ENCODE measurements at regions of chr13 and their contacts with region 1.

Region 1: GRCh38 chr13:97359181-97360057 is 74.5 kb upstream of the RAP2A start:
- DNase-seq: peak; percentile 87
- H3K4me3 Mint-ChIP-seq: no peak overlapping the region
- H3K27ac Mint-ChIP-seq: peak overlapping the region; percentile 49
- H3K4me1 Mint-ChIP-seq: no peaks in the 10 kb centered on the region
- H3K27me3 Mint-ChIP-seq: no peaks in the 10 kb centered on the region
- CTCF ChIP-seq: peak; percentile 96

Region 2: DNA sequence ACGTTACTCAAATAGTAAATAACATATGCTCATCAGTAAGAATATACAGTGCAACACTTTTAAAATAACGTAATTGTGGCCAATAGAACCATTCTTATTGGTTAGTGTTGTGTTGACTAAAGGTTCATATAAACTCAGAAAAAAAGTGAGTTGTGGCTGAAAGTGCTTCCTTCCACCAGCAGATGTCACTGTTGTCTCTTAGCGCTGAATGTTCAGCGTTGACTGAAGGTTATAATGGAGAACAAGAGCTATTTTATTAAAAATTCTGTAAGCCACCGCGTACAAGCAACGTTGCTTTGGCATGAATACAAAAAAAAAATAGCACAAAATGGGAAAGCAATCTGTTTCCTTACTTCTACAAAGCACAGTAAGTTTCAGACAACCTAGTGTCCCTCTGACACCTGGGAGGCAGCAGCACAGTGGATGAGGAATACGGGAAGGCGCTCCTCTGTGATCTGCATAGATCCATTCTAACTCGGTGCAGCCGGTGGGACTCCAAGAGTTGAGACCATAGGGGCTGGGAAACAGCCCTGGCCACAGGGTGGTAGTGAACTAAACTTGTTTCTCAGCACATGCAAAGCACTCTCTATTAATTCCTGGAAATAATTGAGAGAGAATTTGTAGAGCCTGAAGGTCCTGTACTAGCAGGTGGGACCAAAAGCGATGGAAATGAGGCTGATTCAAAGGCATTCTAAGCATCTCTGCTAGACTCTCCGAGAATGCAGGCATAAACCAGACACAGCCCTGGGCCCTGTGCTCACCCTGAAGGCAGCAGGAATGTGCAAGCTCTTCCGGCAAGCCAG is 341.2 kb before region 1 on chr13:
- CTCF ChIA-PET with region 1: interaction called, 17 read pairs
- POLR2A ChIA-PET with region 1: interaction called, 5 read pairs
- intact Hi-C with region 1: loop called (anchors 1 kb)
- DNase-seq: peak; percentile 80
- H3K4me3 Mint-ChIP-seq: peak overlapping the region; percentile 11
- H3K27ac Mint-ChIP-seq: no peak overlapping the region
- H3K4me1 Mint-ChIP-seq: no peaks in the 10 kb centered on the region
- H3K27me3 Mint-ChIP-seq: peaks cover 27% of the 10 kb centered on the region
- CTCF ChIP-seq: peak; percentile 89

Region 3: GRCh38 chr13:97124916-97125809 is 234.3 kb before region 1 on chr13:
- CTCF ChIA-PET with region 1: interaction called, 13 read pairs
- POLR2A ChIA-PET with region 1: no interaction called
- intact Hi-C with region 1: no loop called
- DNase-seq: peak; percentile 89
- H3K4me3 Mint-ChIP-seq: peak overlapping the region; percentile 28
- H3K27ac Mint-ChIP-seq: peak overlapping the region; percentile 21
- H3K4me1 Mint-ChIP-seq: peaks cover 47% of the 10 kb centered on the region
- H3K27me3 Mint-ChIP-seq: no peaks in the 10 kb centered on the region
- CTCF ChIP-seq: no peak

Region 4: DNA sequence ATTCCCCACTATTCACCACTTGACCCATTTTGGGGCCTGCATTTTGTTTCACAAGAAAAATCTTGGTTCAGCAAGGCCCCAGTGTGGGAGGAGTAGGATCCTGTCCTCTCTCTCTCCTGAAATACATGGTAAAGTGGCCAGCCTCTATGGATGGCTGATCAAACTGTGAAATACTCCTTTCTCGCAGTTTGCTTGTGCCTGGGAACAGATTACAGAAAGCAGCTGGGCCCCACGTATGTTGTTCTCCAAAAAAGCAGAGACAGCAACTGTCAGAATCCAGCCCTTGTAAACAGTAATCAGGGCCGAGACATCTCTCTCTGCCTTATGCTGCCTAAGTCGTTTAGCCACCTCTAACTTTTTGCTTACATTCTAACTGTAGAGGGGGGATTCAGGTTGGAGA is 13.5 kb after region 1 on chr13:
- CTCF ChIA-PET with region 1: interaction called, 41 read pairs
- POLR2A ChIA-PET with region 1: interaction called, 4 read pairs
- intact Hi-C with region 1: no loop called
- DNase-seq: no peak
- H3K4me3 Mint-ChIP-seq: no peak overlapping the region
- H3K27ac Mint-ChIP-seq: no peak overlapping the region
- H3K4me1 Mint-ChIP-seq: peaks cover 6% of the 10 kb centered on the region
- H3K27me3 Mint-ChIP-seq: no peaks in the 10 kb centered on the region
- CTCF ChIP-seq: no peak

Region 5: GRCh38 chr13:97798836-97799235 is 439.4 kb after region 1 on chr13:
- CTCF ChIA-PET with region 1: interaction called, 6 read pairs
- POLR2A ChIA-PET with region 1: no interaction called
- intact Hi-C with region 1: loop called (anchors 5 kb)
- DNase-seq: no peak
- H3K4me3 Mint-ChIP-seq: peak overlapping the region; percentile 38
- H3K27ac Mint-ChIP-seq: peak overlapping the region; percentile 76
- H3K4me1 Mint-ChIP-seq: peaks cover 26% of the 10 kb centered on the region
- H3K27me3 Mint-ChIP-seq: no peaks in the 10 kb centered on the region
- CTCF ChIP-seq: no peak

Region 6: DNA sequence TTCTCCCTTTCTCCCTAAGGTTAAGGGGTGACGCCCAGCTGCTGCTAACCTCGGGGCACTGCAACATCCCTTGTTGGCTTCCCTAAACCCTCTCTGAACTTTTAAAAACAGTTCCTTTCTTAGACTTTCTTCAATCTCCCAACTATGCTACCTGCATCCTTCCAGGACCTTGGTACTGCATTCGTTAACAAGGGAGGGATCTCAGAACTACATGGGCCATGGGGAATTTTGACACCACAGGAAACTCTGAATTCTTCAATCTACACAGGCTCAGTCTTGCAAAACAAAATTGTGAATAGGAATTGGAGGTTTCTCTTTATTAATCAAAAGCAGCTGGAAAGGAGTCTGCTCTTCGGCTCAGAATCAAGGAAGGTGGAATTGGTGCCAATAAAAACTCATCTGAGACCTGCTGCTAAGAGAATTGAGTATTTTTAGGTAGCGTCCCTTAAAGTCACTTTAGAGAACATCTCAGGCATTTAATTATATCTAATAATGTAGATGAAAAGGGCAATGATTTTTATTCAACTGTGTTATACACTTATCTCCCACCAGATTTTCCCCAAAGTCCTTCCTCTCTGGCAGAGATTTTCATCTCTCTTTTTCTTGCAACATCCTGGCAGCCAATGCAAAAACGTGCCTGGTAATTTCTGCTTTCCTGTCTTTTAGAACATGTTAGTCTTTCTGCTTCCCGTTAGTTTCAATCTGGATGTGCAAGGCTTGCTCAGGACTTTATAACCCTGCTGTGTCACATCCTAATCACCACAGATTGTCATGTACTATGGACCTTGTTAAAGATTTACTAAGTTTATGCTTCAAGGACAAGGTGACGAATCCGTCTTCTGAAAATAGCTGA is 1462.2 kb after region 1 on chr13:
- CTCF ChIA-PET with region 1: no interaction called
- POLR2A ChIA-PET with region 1: no interaction called
- intact Hi-C with region 1: no loop called
- DNase-seq: no peak
- H3K4me3 Mint-ChIP-seq: no peak overlapping the region
- H3K27ac Mint-ChIP-seq: no peak overlapping the region
- H3K4me1 Mint-ChIP-seq: no peaks in the 10 kb centered on the region
- H3K27me3 Mint-ChIP-seq: no peaks in the 10 kb centered on the region
- CTCF ChIP-seq: no peak

Measured in MCF 10A (cell line).